PC-3 (cell line): ENCODE measurements at regions of chr14 and their contacts with region 1.

Region 1: DNA sequence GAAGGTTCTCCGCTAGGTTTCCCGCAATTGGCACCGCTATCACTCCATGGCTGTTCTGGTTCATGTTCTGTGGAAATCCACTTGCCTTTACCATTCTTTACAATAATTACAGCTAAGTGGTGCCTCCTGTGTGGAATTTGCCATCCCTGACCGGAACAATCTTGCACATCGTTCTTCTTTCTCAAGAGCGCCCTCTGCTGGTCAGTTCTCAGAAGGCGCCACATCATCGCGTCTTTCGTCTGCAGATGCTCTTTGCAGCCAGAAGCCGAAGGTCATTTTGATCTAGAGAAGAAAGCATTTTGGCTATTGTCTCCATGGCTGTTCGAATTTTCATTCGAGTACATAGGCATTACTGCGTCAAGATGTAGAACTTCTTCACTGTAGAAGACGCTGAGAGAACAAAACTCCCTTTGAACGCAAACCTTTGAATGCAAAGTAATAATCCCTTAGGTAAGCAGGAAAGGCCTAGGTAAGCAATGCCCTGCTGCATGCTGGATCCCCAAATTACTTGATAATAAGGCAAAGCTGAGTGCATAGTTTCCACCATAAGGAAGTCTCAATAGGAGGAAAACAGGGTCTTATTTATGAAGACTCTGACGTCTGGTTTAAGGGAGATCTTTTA is 10.1 kb upstream of the RTRAF start:
- DNase-seq: peak; percentile 93
- ATAC-seq: peak; percentile 96
- H3K4me3 ChIP-seq: no peak overlapping the region
- H3K27ac ChIP-seq: no peak overlapping the region
- H3K4me1 ChIP-seq: no peaks in the 10 kb centered on the region
- H3K27me3 ChIP-seq: no peaks in the 10 kb centered on the region
- CTCF ChIP-seq: peak; percentile 97

Region 2: DNA sequence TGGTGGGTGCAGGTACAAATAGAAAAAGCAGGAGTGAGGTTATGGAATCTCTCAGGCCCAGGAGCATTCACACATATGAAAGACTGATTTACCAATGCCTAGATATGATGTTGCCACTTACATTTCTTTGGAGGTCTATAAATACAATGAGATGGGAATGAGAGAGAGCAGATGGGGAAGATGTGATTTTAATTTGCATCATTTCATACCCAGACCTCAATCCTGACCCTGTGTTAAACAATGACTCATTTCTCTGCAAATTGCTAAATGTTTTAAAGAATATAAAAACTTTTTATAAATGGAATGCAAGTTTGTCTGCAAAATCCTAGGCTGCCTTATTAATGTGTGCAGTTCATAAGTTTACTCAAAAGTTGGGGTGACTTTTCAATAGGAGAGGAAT is 157.4 kb before region 1 on chr14:
- CTCF ChIA-PET with region 1: interaction called, 3 read pairs
- POLR2A ChIA-PET with region 1: no interaction called
- intact Hi-C with region 1: loop called (anchors 1 kb)
- DNase-seq: peak; percentile 9
- ATAC-seq: peak; percentile 55
- H3K4me3 ChIP-seq: no peak overlapping the region
- H3K27ac ChIP-seq: no peak overlapping the region
- H3K4me1 ChIP-seq: peaks cover 25% of the 10 kb centered on the region
- H3K27me3 ChIP-seq: no peaks in the 10 kb centered on the region
- CTCF ChIP-seq: no peak

Region 3: DNA sequence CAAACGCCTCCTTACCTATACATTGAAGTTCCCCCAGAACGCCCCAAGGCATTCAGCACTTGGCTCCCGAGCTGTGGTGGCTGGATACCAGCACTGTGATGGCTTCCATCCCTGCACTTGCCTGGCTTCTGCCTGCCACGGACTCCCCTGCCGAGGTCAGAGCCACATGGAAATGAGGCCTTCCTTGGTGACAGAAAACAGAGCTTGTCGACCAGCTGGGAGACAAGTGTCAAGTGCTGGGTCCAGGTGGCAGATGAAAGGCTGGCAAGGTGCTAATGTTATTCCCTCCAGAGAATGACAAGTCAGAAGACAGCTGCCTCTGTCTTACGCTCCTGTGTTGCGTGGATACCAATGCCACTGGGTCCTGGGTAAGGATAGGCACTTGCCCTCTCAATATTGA is 145.0 kb before region 1 on chr14:
- CTCF ChIA-PET with region 1: no interaction called
- POLR2A ChIA-PET with region 1: interaction called, 11 read pairs
- intact Hi-C with region 1: no loop called
- DNase-seq: no peak
- ATAC-seq: no peak
- H3K4me3 ChIP-seq: no peak overlapping the region
- H3K27ac ChIP-seq: no peak overlapping the region
- H3K4me1 ChIP-seq: peaks cover 17% of the 10 kb centered on the region
- H3K27me3 ChIP-seq: no peaks in the 10 kb centered on the region
- CTCF ChIP-seq: no peak